PC-3 (cell line): ENCODE measurements at regions of chr6 and their contacts with region 1.

Region 1: DNA sequence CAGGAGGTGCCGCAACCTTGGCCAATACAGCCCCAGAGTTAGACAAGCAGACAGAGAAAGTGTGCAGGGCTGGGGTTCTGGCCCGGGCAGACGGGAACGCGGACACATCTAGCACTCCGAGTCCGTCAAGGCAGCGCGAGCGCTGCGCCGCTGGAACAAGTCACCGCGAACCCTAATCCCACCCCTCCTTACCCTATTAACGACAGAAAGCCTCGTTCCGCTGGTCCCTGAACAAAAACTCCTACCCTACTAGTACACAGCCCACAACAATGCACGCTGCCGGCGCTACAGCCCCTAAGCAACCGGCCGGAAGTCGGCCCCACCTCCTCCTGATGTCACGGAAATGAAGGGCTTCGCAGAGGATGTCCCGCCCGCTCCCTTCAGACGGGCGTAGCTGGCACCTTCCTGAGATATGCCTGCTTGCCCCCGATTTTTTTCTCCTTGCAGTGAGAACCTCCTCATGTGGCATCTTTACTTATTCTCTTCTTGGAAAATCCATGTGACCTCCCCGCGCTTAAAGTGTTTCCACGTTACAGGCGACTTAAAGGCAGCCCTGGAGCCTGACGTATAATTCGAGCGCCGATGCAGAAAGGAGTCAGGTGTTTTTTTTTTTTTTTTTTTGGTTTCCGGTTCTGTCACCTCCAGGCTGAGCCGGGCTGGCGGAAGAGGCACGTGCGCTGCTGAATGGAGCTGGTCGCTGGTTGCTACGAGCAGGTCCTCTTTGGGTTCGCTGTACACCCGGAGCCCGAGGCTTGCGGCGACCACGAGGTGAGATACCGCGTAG is at the starts of genes C6orf52 and PAK1IP1:
- DNase-seq: peak; percentile 91
- ATAC-seq: peak; percentile 96
- H3K4me3 ChIP-seq: peak within 1 kb of the TSS; percentile 98
- H3K27ac ChIP-seq: peak within 1 kb of the TSS; percentile 94
- H3K4me1 ChIP-seq: peaks cover 19% of the 10 kb centered on the region
- H3K27me3 ChIP-seq: no peaks in the 10 kb centered on the region
- CTCF ChIP-seq: no peak
- total RNA-seq, gene C6orf52: 0.80 TPM in 1 of 2 replicates, not detected in the other
- total RNA-seq, gene PAK1IP1: 32.8 and 34.0 TPM in 2 replicates

Region 2: GRCh38 chr6:10510592-10511367 is 183.7 kb before region 1 on chr6:
- CTCF ChIA-PET with region 1: no interaction called
- POLR2A ChIA-PET with region 1: no interaction called
- intact Hi-C with region 1: loop called (anchors 1 kb)
- DNase-seq: peak; percentile 77
- ATAC-seq: peak; percentile 98
- H3K4me3 ChIP-seq: peak overlapping the region; percentile 55
- H3K27ac ChIP-seq: no peak overlapping the region
- H3K4me1 ChIP-seq: peaks cover 11% of the 10 kb centered on the region
- H3K27me3 ChIP-seq: no peaks in the 10 kb centered on the region
- CTCF ChIP-seq: peak; percentile 92

Region 3: GRCh38 chr6:10613066-10613465 is 81.4 kb before region 1 on chr6:
- CTCF ChIA-PET with region 1: no interaction called
- POLR2A ChIA-PET with region 1: interaction called, 3 read pairs
- intact Hi-C with region 1: loop called (anchors 1 kb)
- DNase-seq: peak; percentile 57
- ATAC-seq: peak; percentile 94
- H3K4me3 ChIP-seq: no peak overlapping the region
- H3K27ac ChIP-seq: 0 out of 2 replicates have a peak overlapping the region, but pooled peaks have one; percentile 28
- H3K4me1 ChIP-seq: peaks cover 21% of the 10 kb centered on the region
- H3K27me3 ChIP-seq: no peaks in the 10 kb centered on the region
- CTCF ChIP-seq: no peak

Region 4: DNA sequence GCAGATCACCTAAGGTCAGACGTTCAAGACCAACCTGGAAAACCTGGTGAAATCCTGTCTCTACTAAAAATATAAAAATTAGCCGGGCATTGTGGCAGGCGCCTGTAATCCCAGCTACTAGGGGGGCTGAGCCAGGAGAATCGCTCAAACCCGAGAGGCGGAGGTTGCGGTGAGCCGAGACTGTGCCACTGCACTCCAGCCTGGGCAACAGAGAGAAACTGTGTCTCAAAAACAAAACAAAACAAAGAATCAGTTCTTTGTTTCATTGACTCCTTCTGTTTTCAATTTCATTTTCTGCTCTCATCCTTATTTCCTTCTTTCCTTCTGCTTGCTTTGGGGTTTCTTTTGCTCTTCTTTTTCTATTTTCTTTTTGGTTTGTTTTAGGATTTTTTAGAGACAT is 19.5 kb after region 1 on chr6:
- CTCF ChIA-PET with region 1: no interaction called
- POLR2A ChIA-PET with region 1: no interaction called
- intact Hi-C with region 1: no loop called
- DNase-seq: no peak
- ATAC-seq: no peak
- H3K4me3 ChIP-seq: no peak overlapping the region
- H3K27ac ChIP-seq: no peak overlapping the region
- H3K4me1 ChIP-seq: no peaks in the 10 kb centered on the region
- H3K27me3 ChIP-seq: no peaks in the 10 kb centered on the region
- CTCF ChIP-seq: no peak

Region 5: GRCh38 chr6:10733151-10733715 is 38.7 kb after region 1 on chr6:
- CTCF ChIA-PET with region 1: interaction called, 11 read pairs
- POLR2A ChIA-PET with region 1: interaction called, 8 read pairs
- intact Hi-C with region 1: no loop called
- DNase-seq: no peak
- ATAC-seq: no peak
- H3K4me3 ChIP-seq: no peak overlapping the region
- H3K27ac ChIP-seq: peak overlapping the region; percentile 69; the same call in 1 of the 2 replicates
- H3K4me1 ChIP-seq: peaks cover 25% of the 10 kb centered on the region
- H3K27me3 ChIP-seq: no peaks in the 10 kb centered on the region
- CTCF ChIP-seq: no peak

Region 6: DNA sequence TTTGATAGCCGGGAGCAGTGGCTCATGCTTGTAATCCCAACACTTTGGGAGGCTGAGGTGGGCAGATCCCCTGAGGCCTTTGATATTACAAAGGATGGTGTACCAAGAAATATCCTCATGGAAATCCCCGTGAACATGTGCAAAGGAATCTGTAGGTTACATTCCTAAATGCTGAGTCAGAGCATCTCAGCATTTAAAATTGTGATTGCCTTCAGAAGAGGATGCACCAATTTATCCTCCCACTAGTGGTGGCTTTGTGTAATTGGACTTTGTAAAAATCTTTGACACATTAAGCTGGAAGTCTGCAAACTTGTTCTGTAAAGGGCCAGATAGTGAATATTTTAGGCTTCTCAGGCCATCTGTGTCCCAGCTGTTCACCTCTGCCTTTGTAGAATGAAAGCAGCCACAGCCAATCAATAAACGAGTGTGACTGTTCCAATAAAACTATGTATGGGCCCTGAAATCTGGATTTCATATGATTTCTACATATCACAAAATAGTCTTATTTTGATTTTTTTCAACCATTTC is 64.9 kb after region 1 on chr6:
- CTCF ChIA-PET with region 1: no interaction called
- POLR2A ChIA-PET with region 1: no interaction called
- intact Hi-C with region 1: loop called (anchors 1 kb)
- DNase-seq: peak; percentile 99
- ATAC-seq: peak; percentile 71
- H3K4me3 ChIP-seq: peak overlapping the region; percentile 47
- H3K27ac ChIP-seq: peak overlapping the region; percentile 76
- H3K4me1 ChIP-seq: peaks cover 29% of the 10 kb centered on the region
- H3K27me3 ChIP-seq: no peaks in the 10 kb centered on the region
- CTCF ChIP-seq: peak; percentile 73